Activated naive CD4-positive, alpha-beta T cell treated with anti-CD3 and anti-CD28 coated beads for 36 hours (primary cell): ENCODE measurements at regions of chr6 and their contacts with region 1.

Region 1: GRCh38 chr6:195861-196360 is 96.4 kb upstream of the DUSP22 start:
- DNase-seq: peak; percentile 89
- H3K4me3 Mint-ChIP-seq: no peak overlapping the region
- H3K27ac Mint-ChIP-seq: peak overlapping the region; percentile 64
- H3K4me1 Mint-ChIP-seq: peaks cover 50% of the 10 kb centered on the region
- H3K27me3 Mint-ChIP-seq: no peaks in the 10 kb centered on the region

Region 2: DNA sequence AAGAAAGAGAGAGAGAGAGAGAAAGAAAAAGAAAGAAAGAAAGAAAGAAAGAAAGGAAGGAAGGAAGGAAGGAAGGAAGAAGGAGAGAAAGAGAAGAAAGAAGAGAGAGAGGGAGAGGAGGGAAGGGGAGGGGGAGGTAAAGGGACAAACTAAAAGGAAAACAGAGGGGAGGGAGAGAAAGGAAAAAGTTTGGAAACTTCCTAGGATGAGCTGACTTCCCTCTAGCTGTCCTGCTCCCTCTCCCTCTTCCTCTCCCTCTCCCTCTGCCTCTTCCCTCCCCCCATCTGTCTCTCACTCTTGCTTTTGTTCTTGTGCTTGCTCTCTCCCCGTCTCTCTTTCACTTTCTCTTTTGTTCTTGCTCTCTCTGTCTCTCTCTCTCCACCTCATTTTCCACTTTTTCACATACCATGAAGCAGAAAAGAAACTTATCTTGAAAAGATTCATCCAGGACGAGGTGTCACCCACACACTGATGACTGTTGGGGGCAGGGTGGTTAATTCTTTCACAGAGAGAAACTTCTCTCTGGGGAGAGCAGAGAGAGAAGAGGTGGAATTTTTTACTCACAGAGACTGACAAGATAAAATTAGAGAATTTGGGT is 40.0 kb after region 1 on chr6:
- CTCF ChIA-PET with region 1: no interaction called
- intact Hi-C with region 1: loop called (anchors 1 kb)
- DNase-seq: peak; percentile 88
- H3K4me3 Mint-ChIP-seq: peak overlapping the region; percentile 52
- H3K27ac Mint-ChIP-seq: peak overlapping the region; percentile 86
- H3K4me1 Mint-ChIP-seq: peaks cover 41% of the 10 kb centered on the region
- H3K27me3 Mint-ChIP-seq: no peaks in the 10 kb centered on the region

Region 3: GRCh38 chr6:251920-252319 is 56.0 kb after region 1 on chr6:
- CTCF ChIA-PET with region 1: no interaction called
- intact Hi-C with region 1: loop called (anchors 2 kb)
- DNase-seq: no peak
- H3K4me3 Mint-ChIP-seq: no peak overlapping the region
- H3K27ac Mint-ChIP-seq: peak overlapping the region; percentile 63
- H3K4me1 Mint-ChIP-seq: peaks cover 43% of the 10 kb centered on the region
- H3K27me3 Mint-ChIP-seq: no peaks in the 10 kb centered on the region

Region 4: GRCh38 chr6:317448-318144 is 121.7 kb after region 1 on chr6:
- CTCF ChIA-PET with region 1: no interaction called
- intact Hi-C with region 1: loop called (anchors 1 kb)
- DNase-seq: no peak
- H3K4me3 Mint-ChIP-seq: no peak overlapping the region
- H3K27ac Mint-ChIP-seq: no peak overlapping the region
- H3K4me1 Mint-ChIP-seq: peaks cover 29% of the 10 kb centered on the region
- H3K27me3 Mint-ChIP-seq: no peaks in the 10 kb centered on the region